ENCODE measurements at regions of chr17 and their contacts with region 1.

Region 1: GRCh38 chr17:43766413-43767052 is 7.9 kb upstream of the SOST start:
- DNase-seq: peak; percentile 59
- H3K4me3 Mint-ChIP-seq: no peak overlapping the region
- H3K27ac Mint-ChIP-seq: no peak overlapping the region
- H3K4me1 Mint-ChIP-seq: no peaks in the 10 kb centered on the region
- H3K27me3 Mint-ChIP-seq: no peaks in the 10 kb centered on the region

Region 2: GRCh38 chr17:43645765-43646481 is 120.6 kb before region 1 on chr17:
- CTCF ChIA-PET with region 1: no interaction called
- POLR2A ChIA-PET with region 1: no interaction called
- intact Hi-C with region 1: no loop called
- DNase-seq: peak; percentile 34
- H3K4me3 Mint-ChIP-seq: no peak overlapping the region
- H3K27ac Mint-ChIP-seq: no peak overlapping the region
- H3K4me1 Mint-ChIP-seq: peaks cover 22% of the 10 kb centered on the region
- H3K27me3 Mint-ChIP-seq: peaks cover 5% of the 10 kb centered on the region

Region 3: GRCh38 chr17:43673516-43674323 is 92.8 kb before region 1 on chr17:
- CTCF ChIA-PET with region 1: interaction called, 14 read pairs
- POLR2A ChIA-PET with region 1: no interaction called
- intact Hi-C with region 1: no loop called
- DNase-seq: peak; percentile 85
- H3K4me3 Mint-ChIP-seq: no peak overlapping the region
- H3K27ac Mint-ChIP-seq: no peak overlapping the region
- H3K4me1 Mint-ChIP-seq: peaks cover 12% of the 10 kb centered on the region
- H3K27me3 Mint-ChIP-seq: no peaks in the 10 kb centered on the region

Region 4: DNA sequence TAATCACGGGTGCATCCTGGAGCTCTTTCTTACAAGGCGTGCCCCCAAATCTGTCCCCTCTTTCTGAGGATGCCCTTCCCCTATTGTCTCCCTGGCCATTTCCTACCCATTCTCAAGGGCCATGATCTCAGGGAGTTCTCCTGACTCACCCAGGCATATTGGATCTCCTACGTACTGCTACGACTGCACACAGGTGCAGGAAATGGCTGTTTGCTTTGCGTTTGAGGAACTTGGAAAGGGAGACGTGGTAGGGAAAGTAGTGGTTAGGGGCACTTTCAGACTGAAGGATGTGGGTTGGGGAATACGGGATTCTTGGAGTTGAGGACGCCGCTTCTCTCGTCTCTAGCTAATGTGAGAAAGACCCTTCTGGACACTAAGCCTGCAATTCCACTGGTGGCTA is 86.1 kb before region 1 on chr17:
- CTCF ChIA-PET with region 1: interaction called, 10 read pairs
- POLR2A ChIA-PET with region 1: no interaction called
- intact Hi-C with region 1: no loop called
- DNase-seq: no peak
- H3K4me3 Mint-ChIP-seq: no peak overlapping the region
- H3K27ac Mint-ChIP-seq: no peak overlapping the region
- H3K4me1 Mint-ChIP-seq: peaks cover 5% of the 10 kb centered on the region
- H3K27me3 Mint-ChIP-seq: no peaks in the 10 kb centered on the region

Region 5: DNA sequence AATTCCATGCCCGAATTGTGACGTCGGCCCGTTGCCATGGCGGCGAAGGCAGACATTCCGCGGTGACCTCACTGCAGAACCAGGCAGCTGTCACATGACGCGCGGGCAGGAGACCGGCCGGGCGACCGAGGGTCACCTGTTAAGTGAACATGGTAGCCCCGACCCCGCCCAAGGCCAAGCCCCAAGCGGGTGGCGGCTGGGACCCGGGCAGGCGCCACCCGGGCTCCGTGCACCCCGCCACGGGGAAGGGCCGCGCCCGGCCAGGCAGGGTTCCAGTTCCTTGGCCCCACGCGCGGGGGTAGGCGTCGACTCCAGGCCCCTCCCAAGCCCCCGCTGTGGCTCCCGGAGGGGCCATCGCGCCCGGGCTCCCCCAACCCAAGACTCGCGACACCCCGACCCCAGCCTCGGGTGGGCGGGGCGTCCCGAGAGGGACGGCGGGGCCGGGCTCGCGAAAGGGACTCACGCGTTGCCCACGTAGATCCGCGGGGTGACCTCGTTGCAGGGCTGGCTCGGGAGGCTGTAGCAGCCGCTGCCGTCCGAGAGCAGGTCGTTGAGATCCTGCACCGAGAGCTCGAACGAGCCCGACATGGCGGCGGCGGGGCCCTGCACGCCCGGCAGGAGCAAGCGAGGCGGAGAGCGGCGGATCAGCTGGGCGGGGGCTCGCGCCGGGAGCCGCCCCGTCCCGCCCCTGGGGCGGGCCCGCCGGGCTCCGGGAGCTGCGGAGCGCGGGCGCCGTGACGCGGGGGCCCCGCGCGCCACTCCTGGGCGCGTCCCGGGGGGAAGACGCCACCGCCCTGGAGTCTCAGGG is 12.0 kb after region 1 on chr17 and contains the start of gene DUSP3:
- CTCF ChIA-PET with region 1: interaction called, 30 read pairs
- POLR2A ChIA-PET with region 1: interaction called, 4 read pairs
- intact Hi-C with region 1: no loop called
- DNase-seq: peak; percentile 79
- H3K4me3 Mint-ChIP-seq: peak within 1 kb of the TSS; percentile 83
- H3K27ac Mint-ChIP-seq: no peak within 1 kb of the TSS
- H3K4me1 Mint-ChIP-seq: peaks cover 6% of the 10 kb centered on the region
- H3K27me3 Mint-ChIP-seq: peaks cover 24% of the 10 kb centered on the region
- total RNA-seq, gene DUSP3: 13.8 to 14.8 TPM

Region 6: GRCh38 chr17:43787728-43788127 is 21.2 kb after region 1 on chr17:
- CTCF ChIA-PET with region 1: interaction called, 11 read pairs
- POLR2A ChIA-PET with region 1: no interaction called
- intact Hi-C with region 1: no loop called
- DNase-seq: no peak
- H3K4me3 Mint-ChIP-seq: no peak overlapping the region
- H3K27ac Mint-ChIP-seq: no peak overlapping the region
- H3K4me1 Mint-ChIP-seq: peaks cover 13% of the 10 kb centered on the region
- H3K27me3 Mint-ChIP-seq: peaks cover 5% of the 10 kb centered on the region

Region 7: GRCh38 chr17:43846221-43846712 is 79.7 kb after region 1 on chr17:
- CTCF ChIA-PET with region 1: interaction called, 17 read pairs
- POLR2A ChIA-PET with region 1: no interaction called
- intact Hi-C with region 1: no loop called
- DNase-seq: peak; percentile 86
- H3K4me3 Mint-ChIP-seq: no peak overlapping the region
- H3K27ac Mint-ChIP-seq: no peak overlapping the region
- H3K4me1 Mint-ChIP-seq: no peaks in the 10 kb centered on the region
- H3K27me3 Mint-ChIP-seq: peaks cover 23% of the 10 kb centered on the region